Breast epithelium (tissue), 4 donors: ENCODE measurements at regions of chr5 and their contacts with region 1.

Region 1: GRCh38 chr5:157449011-157449723 is 10.8 kb upstream of the NIPAL4 start:
- DNase-seq: peak in 1 of 2 donors; percentile 27
- H3K4me3 ChIP-seq: no peak overlapping the region
- H3K27ac ChIP-seq: peak overlapping the region in 1 of 2 donors; percentile 30
- H3K4me1 ChIP-seq: no peaks in the 10 kb centered on the region
- H3K27me3 ChIP-seq: no peaks in the 10 kb centered on the region
- CTCF ChIP-seq: no peak
- POLR2A ChIP-seq: no peak

Region 2: DNA sequence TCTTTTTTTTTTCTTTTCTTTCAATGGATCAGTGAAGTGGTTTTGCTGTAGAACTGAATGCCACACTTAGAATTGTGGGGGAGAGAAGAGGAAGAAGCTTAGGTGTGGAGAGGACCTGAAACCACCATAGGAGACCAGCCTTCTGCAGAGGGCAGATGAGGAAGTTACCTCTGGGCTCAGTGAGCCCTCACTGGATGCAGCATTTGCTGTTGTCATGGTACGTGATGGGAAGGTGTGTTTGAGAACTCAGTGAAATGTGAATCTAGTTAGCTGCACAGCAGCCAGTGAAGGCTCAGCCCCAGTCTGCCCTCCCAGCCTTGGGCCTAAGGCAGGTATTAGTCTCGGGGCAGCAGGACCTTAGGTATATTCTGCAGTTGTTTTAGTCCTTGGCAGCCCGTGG is 165.7 kb before region 1 on chr5:
- intact Hi-C with region 1: no loop called
- DNase-seq: no peak
- H3K4me3 ChIP-seq: no peak overlapping the region
- H3K27ac ChIP-seq: no peak overlapping the region
- H3K4me1 ChIP-seq: no peaks in the 10 kb centered on the region
- H3K27me3 ChIP-seq: no peaks in the 10 kb centered on the region
- CTCF ChIP-seq: no peak
- POLR2A ChIP-seq: no peak

Region 3: GRCh38 chr5:157479612-157480510 is 30.7 kb after region 1 on chr5:
- intact Hi-C with region 1: loop called (anchors 1 kb)
- DNase-seq: no peak
- H3K4me3 ChIP-seq: no peak overlapping the region
- H3K27ac ChIP-seq: no peak overlapping the region
- H3K4me1 ChIP-seq: no peaks in the 10 kb centered on the region
- H3K27me3 ChIP-seq: no peaks in the 10 kb centered on the region
- CTCF ChIP-seq: no peak
- POLR2A ChIP-seq: no peak